Activated CD4-positive, alpha-beta memory T cell treated with anti-CD3 and anti-CD28 coated beads, Interleukin-2, amount 10 ng/mL, durations not matched to agents 7 days and 5 days (primary cell): ENCODE measurements at regions of chr22 and their contacts with region 1.

Region 1: GRCh38 chr22:30754971-30755756 is 60.5 kb downstream of the OSBP2 start:
- DNase-seq: peak; percentile 74
- H3K4me3 Mint-ChIP-seq: no peak overlapping the region
- H3K27ac Mint-ChIP-seq: no peak overlapping the region
- H3K4me1 Mint-ChIP-seq: peaks cover 17% of the 10 kb centered on the region
- H3K27me3 Mint-ChIP-seq: no peaks in the 10 kb centered on the region

Region 2: DNA sequence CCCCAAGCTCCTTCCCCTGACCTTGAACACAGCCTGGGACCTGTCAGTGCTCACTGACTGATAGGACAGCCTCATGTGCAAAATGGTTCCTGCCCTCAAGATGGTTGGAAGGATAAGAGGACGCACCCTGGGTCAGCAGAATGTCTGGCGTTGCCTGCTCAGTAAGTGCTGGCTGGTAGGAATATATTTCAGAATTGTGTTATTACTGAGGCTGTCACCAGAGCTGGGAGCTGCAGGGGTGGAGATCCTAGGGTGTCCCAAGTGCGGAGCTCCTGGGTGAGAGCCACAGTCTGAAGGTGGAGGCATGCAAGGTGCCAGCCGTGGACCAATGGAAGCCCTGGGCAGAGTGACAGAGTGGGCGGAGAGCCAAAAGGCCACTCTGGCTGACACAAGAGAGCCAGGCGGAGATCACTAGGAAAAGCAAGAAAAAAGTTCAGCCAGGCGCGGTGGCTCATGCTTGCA is 248.6 kb before region 1 on chr22:
- CTCF ChIA-PET with region 1: no interaction called
- POLR2A ChIA-PET with region 1: no interaction called
- DNase-seq: no peak
- H3K4me3 Mint-ChIP-seq: no peak overlapping the region
- H3K27ac Mint-ChIP-seq: no peak overlapping the region
- H3K4me1 Mint-ChIP-seq: no peaks in the 10 kb centered on the region
- H3K27me3 Mint-ChIP-seq: peaks cover 19% of the 10 kb centered on the region

Region 3: DNA sequence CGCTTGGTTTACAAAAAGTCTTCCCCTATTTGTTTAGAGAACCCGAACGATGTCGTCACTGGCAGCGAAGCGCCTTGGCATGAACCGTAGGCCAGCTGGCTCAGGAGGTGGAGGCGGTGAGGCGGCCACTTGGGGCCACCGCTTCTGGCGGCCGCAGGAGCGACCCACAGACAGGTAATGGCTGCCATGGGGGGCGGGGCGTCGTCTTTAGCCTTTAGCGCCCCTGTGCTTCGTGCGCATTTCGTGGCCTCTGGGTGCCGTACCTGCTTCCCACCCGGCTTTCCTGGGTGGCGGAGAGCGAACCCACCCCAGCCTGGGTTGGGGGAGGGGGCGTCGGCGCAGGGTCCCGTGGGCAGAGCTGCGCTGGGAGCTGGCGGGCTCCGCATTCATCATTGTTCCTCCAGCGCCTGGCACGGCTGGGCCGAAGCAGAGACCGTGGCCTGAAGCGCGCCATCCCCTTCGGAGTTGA is 61.0 kb before region 1 on chr22:
- CTCF ChIA-PET with region 1: interaction called, 11 read pairs
- POLR2A ChIA-PET with region 1: no interaction called
- DNase-seq: peak; percentile 69
- H3K4me3 Mint-ChIP-seq: peak overlapping the region; percentile 87
- H3K27ac Mint-ChIP-seq: peak overlapping the region; percentile 53
- H3K4me1 Mint-ChIP-seq: peaks cover 25% of the 10 kb centered on the region
- H3K27me3 Mint-ChIP-seq: no peaks in the 10 kb centered on the region

Region 4: GRCh38 chr22:30705710-30706651 is 49.2 kb before region 1 on chr22:
- CTCF ChIA-PET with region 1: interaction called, 12 read pairs
- POLR2A ChIA-PET with region 1: interaction called, 4 read pairs
- DNase-seq: peak; percentile 45
- H3K4me3 Mint-ChIP-seq: no peak overlapping the region
- H3K27ac Mint-ChIP-seq: peak overlapping the region; percentile 76
- H3K4me1 Mint-ChIP-seq: peaks cover 41% of the 10 kb centered on the region
- H3K27me3 Mint-ChIP-seq: no peaks in the 10 kb centered on the region